Mammary epithelial cell (primary cell): ENCODE measurements at regions of chr12 and their contacts with region 1.

Region 1: DNA sequence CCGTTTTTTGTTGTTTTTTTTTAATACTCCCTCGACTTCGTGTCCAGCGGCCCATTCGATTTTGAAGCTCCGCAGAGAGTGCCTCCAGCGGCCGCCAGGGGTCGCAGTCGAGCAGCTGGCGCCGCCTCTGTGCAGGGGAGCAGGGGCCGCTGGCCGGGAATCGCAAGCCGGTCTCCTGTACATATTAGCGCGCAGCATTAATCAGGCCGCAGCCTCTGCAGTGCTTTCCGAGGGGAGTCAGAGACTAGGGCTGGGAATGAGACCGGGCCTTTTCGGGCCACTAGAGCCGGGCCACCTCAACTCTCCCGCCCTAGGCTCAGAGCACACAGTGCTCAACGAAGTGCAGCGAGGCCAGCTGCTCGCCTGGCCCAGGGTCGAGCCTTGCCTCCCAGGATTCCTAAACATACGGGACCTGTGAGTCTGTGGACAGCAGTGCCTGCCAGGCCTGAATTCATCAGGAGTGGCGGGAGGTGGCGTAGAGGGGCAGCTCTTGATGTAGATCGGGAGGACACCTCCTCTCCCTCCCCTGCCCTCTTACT is 81.8 kb downstream of the EMP1 start:
- DNase-seq: peak; percentile 45
- H3K4me3 ChIP-seq: no peak overlapping the region
- H3K27ac ChIP-seq: no peak overlapping the region
- H3K4me1 ChIP-seq: no peaks in the 10 kb centered on the region
- H3K27me3 ChIP-seq: peaks cover 2% of the 10 kb centered on the region
- CTCF ChIP-seq: peak; percentile 61 to 96

Region 2: GRCh38 chr12:13165617-13166041 is 112.7 kb before region 1 on chr12:
- CTCF ChIA-PET with region 1: no interaction called
- dilution Hi-C with region 1: no loop called
- in situ Hi-C with region 1: no loop called
- intact Hi-C with region 1: no loop called
- DNase-seq: peak; percentile 99
- H3K4me3 ChIP-seq: no peak overlapping the region
- H3K27ac ChIP-seq: peak overlapping the region; percentile 96
- H3K4me1 ChIP-seq: peaks cover 47% of the 10 kb centered on the region
- H3K27me3 ChIP-seq: no peaks in the 10 kb centered on the region
- CTCF ChIP-seq: no peak

Region 3: GRCh38 chr12:13316587-13317246 is 38.4 kb after region 1 on chr12:
- CTCF ChIA-PET with region 1: no interaction called
- dilution Hi-C with region 1: no loop called
- in situ Hi-C with region 1: no loop called
- intact Hi-C with region 1: no loop called
- DNase-seq: no peak
- H3K4me3 ChIP-seq: no peak overlapping the region
- H3K27ac ChIP-seq: no peak overlapping the region
- H3K4me1 ChIP-seq: no peaks in the 10 kb centered on the region
- H3K27me3 ChIP-seq: no peaks in the 10 kb centered on the region
- CTCF ChIP-seq: no peak

Region 4: DNA sequence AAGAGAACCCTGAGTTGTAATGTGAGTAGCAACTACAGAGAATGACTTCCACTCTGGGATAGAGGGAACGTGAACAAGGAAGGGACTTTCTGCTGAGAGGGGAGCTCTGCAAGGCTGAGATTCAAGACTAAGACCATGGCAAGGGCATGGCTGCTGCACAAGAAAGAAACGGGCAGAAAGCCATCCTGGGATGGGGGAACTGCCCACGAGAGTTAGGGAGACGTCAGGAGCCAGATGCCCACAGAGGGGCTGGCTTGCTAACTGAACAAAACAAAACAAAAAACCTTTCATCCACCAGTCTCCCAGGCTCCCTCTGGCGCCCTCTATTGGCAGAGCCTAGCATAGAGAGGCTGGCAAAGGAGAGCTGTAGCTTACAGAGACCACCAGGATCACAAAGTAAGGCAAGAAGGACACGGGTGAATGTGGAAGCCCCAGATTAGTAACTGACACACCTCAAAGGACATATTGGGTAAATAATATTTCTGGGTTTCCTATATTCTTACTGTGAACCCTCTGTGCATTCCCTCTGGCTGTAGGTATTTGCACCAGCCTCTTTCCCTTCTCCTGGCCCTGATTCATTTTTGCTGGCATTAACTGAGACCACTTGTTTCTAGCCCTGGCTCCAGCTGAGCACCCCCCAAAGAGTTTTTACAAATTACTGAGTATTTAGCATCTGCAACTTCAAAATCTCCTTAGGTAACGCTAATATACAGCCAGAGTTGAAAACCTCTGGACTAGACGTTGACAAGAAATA is 256.5 kb after region 1 on chr12:
- CTCF ChIA-PET with region 1: no interaction called
- dilution Hi-C with region 1: no loop called
- in situ Hi-C with region 1: loop called (anchors 10 to 25 kb)
- intact Hi-C with region 1: loop called (anchors 1 kb)
- DNase-seq: peak; percentile 21
- H3K4me3 ChIP-seq: no peak overlapping the region
- H3K27ac ChIP-seq: no peak overlapping the region
- H3K4me1 ChIP-seq: no peaks in the 10 kb centered on the region
- H3K27me3 ChIP-seq: no peaks in the 10 kb centered on the region
- CTCF ChIP-seq: peak; percentile 98

Region 5: GRCh38 chr12:13734584-13735152 is 456.4 kb after region 1 on chr12:
- CTCF ChIA-PET with region 1: no interaction called
- dilution Hi-C with region 1: no loop called
- in situ Hi-C with region 1: no loop called
- intact Hi-C with region 1: loop called (anchors 5 kb)
- DNase-seq: peak; percentile 5
- H3K4me3 ChIP-seq: no peak overlapping the region
- H3K27ac ChIP-seq: no peak overlapping the region
- H3K4me1 ChIP-seq: no peaks in the 10 kb centered on the region
- H3K27me3 ChIP-seq: no peaks in the 10 kb centered on the region
- CTCF ChIP-seq: no peak

Region 6: GRCh38 chr12:13981990-13982389 is 703.7 kb after region 1 on chr12:
- CTCF ChIA-PET with region 1: interaction called, 17 read pairs
- dilution Hi-C with region 1: no loop called
- in situ Hi-C with region 1: no loop called
- intact Hi-C with region 1: no loop called
- DNase-seq: no peak
- H3K4me3 ChIP-seq: no peak overlapping the region
- H3K27ac ChIP-seq: no peak overlapping the region
- H3K4me1 ChIP-seq: peaks cover 13% of the 10 kb centered on the region
- H3K27me3 ChIP-seq: peaks cover 29% of the 10 kb centered on the region
- CTCF ChIP-seq: peak in 1 of 2 donors; percentile 32